ENCODE measurements at regions of chr14 and their contacts with region 1.

Region 1: GRCh38 chr14:101559624-101560533 is 1.4 kb upstream of the DIO3 start:
- DNase-seq: no peak
- H3K4me3 ChIP-seq: peak overlapping the region; percentile 33 to 39
- H3K27ac ChIP-seq: peak overlapping the region; percentile 56 to 67
- H3K4me1 ChIP-seq: no peaks in the 10 kb centered on the region
- H3K27me3 ChIP-seq: peaks cover 32% of the 10 kb centered on the region
- CTCF ChIP-seq: peak in 2 of 4 experiments; percentile 24 to 38
- POLR2A ChIP-seq: no peak

Region 2: GRCh38 chr14:100662879-100663760 is 896.8 kb before region 1 on chr14:
- intact Hi-C with region 1: loop called (anchors 10 kb)
- DNase-seq: peak; percentile 49
- H3K4me3 ChIP-seq: no peak overlapping the region
- H3K27ac ChIP-seq: no peak overlapping the region
- H3K4me1 ChIP-seq: peaks cover 10% of the 10 kb centered on the region
- H3K27me3 ChIP-seq: no peaks in the 10 kb centered on the region
- CTCF ChIP-seq: peak; percentile 84 to 94 (median 89)
- POLR2A ChIP-seq: no peak

Region 3: DNA sequence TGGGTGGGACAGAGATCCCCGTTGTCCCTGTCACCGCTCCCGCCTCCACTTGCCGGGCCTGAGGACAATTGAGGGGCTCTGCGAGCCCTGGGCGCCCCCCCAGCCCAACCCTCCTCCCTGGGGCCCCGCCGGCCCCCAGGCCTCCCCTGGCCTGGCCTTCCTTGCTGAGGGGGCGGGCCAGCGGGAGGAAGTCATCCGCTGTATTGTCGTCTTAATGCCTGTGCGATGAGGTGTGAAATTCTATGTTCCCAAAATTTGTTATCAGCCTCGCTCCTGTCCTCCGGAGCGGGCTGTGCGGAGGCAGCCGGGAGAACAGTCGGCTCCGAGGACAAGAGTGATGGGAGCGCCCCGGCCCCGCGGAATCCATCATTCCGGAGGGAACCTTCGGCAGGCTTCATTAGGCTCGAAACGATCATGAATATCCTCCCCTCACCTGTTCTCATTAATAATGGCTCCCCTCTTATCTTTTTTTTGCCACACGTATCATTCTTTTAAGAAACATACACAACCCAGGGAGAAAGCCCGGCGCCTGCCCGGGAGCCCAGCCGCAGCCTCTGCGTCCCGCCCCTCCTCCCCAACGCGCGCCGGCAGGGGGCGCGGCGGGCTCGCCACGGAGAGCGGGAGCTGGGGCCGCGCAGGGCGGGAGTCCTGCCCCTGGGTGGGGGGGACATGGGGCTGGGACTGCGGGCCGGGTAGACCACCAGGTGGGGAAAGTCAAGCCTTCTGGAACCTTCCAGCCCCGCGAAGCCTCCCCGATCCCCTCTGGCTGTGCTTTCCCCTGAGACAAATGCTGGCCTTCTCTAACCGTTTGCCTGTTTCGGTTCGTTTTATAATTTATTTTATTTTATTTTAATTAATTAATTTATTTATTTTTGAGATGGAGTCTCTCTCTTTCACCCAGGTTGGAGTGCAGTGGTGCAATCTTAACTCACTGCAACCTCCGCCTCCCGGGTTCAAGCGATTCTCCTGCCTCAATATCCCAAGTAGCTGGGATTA is 850.3 kb before region 1 on chr14:
- intact Hi-C with region 1: loop called (anchors 10 kb)
- DNase-seq: no peak
- H3K4me3 ChIP-seq: no peak overlapping the region
- H3K27ac ChIP-seq: no peak overlapping the region
- H3K4me1 ChIP-seq: no peaks in the 10 kb centered on the region
- H3K27me3 ChIP-seq: no peaks in the 10 kb centered on the region
- CTCF ChIP-seq: peak in 3 of 4 experiments; percentile 27 to 72 (median 71)
- POLR2A ChIP-seq: no peak

Region 4: GRCh38 chr14:100850841-100851585 is 708.9 kb before region 1 on chr14:
- intact Hi-C with region 1: loop called (anchors 10 kb)
- DNase-seq: peak; percentile 56
- H3K4me3 ChIP-seq: no peak overlapping the region
- H3K27ac ChIP-seq: no peak overlapping the region
- H3K4me1 ChIP-seq: no peaks in the 10 kb centered on the region
- H3K27me3 ChIP-seq: no peaks in the 10 kb centered on the region
- CTCF ChIP-seq: peak; percentile 68 to 88 (median 72)
- POLR2A ChIP-seq: no peak

Measured in prostate gland (tissue), 2 donors.